RWPE1 (cell line): ENCODE measurements at regions of chr5 and their contacts with region 1.

Region 1: GRCh38 chr5:176994460-176995121 is 12.0 kb downstream of the UIMC1 start:
- DNase-seq: peak; percentile 22
- H3K27ac ChIP-seq: peak overlapping the region; percentile 22
- CTCF ChIP-seq: no peak

Region 2: DNA sequence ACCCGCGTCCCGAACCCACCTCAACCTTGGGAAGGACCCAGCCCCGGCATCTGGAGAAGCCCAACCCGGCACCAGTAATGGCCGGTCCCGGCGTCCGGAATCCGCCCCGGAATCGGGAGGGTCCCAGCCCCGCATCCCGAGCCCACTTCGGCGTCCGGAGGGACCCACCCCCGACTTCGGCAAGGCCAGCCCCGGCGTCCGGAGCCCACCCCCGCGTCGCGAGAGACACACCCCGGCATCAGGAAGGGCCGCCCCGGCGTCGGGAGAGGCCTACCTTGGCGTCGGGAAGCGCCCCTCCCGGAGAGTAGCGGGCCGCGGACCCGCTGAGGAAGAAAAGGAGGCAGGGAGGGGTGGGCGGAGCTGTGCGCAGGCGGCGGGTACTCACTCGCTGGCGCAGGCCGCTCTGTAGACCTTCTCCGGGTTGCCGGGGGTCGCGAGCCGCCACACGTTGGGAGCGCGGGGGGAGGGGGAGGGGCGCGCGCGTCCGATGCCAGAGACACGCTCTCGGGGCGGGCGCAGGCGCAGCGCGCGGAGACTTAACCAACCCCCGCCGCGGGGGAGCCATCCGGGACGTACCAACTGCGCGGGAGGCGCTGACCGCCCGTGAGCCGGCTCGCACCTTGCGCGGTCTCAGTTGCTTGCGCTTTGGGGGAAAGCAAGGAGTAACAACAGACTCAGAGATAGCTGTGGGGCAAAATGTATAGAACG is 11.8 kb after region 1 on chr5 and contains the start of gene UIMC1:
- CTCF ChIA-PET with region 1: interaction called, 5 read pairs
- POLR2A ChIA-PET with region 1: interaction called, 10 read pairs
- DNase-seq: peak; percentile 95
- H3K27ac ChIP-seq: peak within 1 kb of the TSS; percentile 91
- CTCF ChIP-seq: no peak

Region 3: DNA sequence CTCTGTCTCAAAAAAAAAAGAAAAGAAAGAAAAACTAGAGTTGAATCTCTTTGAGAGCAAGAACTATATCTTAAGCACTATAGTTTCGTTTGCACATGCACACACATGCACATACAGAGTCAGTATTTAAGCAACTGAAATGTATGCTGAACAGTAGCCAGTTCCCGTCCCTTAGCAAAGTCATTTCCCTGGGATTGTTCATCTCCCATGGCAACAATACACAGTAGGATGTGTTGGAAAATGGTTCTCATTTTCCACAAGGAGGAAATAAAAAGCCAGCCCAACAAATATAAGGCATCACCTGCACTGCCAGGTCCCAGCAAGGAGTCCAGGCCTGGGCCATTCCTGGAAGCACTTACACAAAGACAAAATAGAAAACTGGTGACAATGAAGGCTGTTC is 23.8 kb after region 1 on chr5:
- CTCF ChIA-PET with region 1: no interaction called
- POLR2A ChIA-PET with region 1: no interaction called
- DNase-seq: no peak
- H3K27ac ChIP-seq: no peak overlapping the region
- CTCF ChIP-seq: no peak

Region 4: GRCh38 chr5:177049285-177049684 is 54.7 kb after region 1 on chr5:
- CTCF ChIA-PET with region 1: no interaction called
- POLR2A ChIA-PET with region 1: no interaction called
- DNase-seq: no peak
- H3K27ac ChIP-seq: no peak overlapping the region
- CTCF ChIP-seq: no peak